WTC11 (cell line): ENCODE measurements at regions of chr2 and their contacts with region 1.

Region 1: GRCh38 chr2:44981136-44982108 is 27.8 kb downstream of the SIX2 start:
- DNase-seq: peak; percentile 82
- ATAC-seq: peak; percentile 87
- H3K4me3 Mint-ChIP-seq: no peak overlapping the region
- H3K27ac Mint-ChIP-seq: no peak overlapping the region
- H3K4me1 Mint-ChIP-seq: peaks cover 17% of the 10 kb centered on the region
- H3K27me3 Mint-ChIP-seq: no peaks in the 10 kb centered on the region; the same call in none of the 2 replicates
- CTCF ChIP-seq: peak; percentile 87

Region 2: DNA sequence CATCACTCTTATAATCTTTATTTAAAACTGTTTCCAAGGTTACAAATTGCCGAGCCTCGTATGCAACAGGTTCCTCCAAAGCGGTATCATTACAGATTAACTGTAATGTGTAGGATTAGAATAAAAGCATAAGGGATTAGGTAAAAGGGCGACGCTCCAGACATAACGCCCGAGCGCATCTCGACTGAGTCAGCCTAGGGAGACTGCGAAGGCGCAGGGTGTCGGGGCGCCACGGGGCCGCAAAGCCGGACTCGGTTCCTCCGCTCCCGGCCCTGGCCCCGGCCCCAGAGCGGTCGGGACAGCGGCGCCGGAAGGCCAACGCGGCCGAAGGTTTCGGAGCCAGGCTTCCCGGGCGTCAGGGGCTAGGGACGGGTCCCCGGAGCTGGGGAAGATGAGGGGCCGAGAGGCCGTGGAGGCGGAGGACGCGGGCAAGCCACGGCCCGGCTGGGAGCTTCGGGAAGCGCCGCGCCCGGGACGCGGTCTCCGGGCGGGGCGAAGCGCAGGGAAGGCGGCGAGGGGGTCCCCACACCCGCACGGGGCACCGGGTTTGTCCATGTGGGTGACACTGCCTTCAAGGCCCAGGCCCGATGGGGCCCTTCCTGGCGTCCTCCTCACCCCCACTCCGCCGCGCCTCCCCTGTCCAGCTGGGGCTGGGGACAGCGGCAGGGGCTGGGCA is 52.8 kb before region 1 on chr2:
- CTCF ChIA-PET with region 1: no interaction called
- POLR2A ChIA-PET with region 1: no interaction called
- DNase-seq: peak; percentile 58
- ATAC-seq: peak; percentile 8
- H3K4me3 Mint-ChIP-seq: peak overlapping the region; percentile 64
- H3K27ac Mint-ChIP-seq: no peak overlapping the region
- H3K4me1 Mint-ChIP-seq: peaks cover 71% of the 10 kb centered on the region
- H3K27me3 Mint-ChIP-seq: peaks cover 95% of the 10 kb centered on the region
- CTCF ChIP-seq: no peak

Region 3: GRCh38 chr2:45000921-45001868 is 19.8 kb after region 1 on chr2:
- CTCF ChIA-PET with region 1: interaction called, 70 read pairs
- POLR2A ChIA-PET with region 1: interaction called, 3 read pairs
- DNase-seq: peak; percentile 49
- ATAC-seq: peak; percentile 12
- H3K4me3 Mint-ChIP-seq: peak overlapping the region; percentile 69
- H3K27ac Mint-ChIP-seq: no peak overlapping the region
- H3K4me1 Mint-ChIP-seq: peaks cover 36% of the 10 kb centered on the region
- H3K27me3 Mint-ChIP-seq: peaks cover 100% of the 10 kb centered on the region
- CTCF ChIP-seq: no peak

Region 4: GRCh38 chr2:45494269-45494977 is 513.0 kb after region 1 on chr2:
- CTCF ChIA-PET with region 1: interaction called, 31 read pairs
- POLR2A ChIA-PET with region 1: no interaction called
- DNase-seq: no peak
- ATAC-seq: no peak
- H3K4me3 Mint-ChIP-seq: no peak overlapping the region
- H3K27ac Mint-ChIP-seq: no peak overlapping the region
- H3K4me1 Mint-ChIP-seq: peaks cover 21% of the 10 kb centered on the region
- H3K27me3 Mint-ChIP-seq: no peaks in the 10 kb centered on the region
- CTCF ChIP-seq: no peak; the same call in 1 of the 2 replicates